ENCODE measurements at regions of chr1 and their contacts with region 1.

Region 1: DNA sequence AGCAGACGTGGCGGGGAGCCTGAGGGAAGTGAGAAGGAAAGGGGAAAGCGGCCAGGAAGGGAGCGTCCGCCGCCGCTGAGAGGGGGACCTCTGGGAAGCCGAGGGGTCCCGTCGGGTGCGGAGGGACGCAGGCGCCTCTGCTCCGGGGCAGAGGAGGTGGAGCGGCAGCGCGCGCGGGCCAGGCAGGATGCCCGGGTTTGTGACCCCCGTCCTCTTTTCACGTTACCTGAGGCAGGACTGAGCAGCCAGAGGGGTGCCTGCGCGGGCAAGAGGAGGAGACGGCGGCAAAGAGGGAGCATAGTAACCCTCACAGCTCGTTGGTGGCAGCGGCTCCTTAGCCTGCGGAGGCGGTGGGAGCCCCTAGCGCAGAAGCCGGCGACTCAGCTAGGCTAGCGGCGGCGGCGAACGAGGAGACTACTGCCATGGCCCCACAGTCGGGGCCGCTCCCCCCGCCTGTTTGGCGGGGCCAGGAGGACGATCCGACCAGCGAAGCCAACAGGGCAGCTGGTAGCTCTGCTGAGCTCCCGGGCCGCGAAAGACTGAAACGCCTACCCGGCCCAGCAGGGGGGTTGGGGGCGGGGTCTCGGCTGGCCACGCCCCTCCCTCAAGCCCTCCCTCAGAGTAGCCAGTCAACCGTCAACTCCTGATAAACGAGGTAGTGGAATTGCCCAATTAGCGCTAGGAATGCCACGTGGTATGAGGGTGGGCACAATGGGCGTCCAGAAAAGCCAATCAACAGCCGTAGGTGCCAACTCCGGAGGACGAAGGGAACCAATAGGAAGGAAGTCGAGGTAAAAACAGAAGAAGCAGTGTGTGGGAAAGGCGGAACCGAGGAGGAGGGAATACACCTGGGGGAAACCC is at the start of gene TESK2:
- DNase-seq: peak; percentile 98
- ATAC-seq: peak; percentile 95
- H3K4me3 Mint-ChIP-seq: no peak within 1 kb of the TSS
- H3K27ac Mint-ChIP-seq: no peak within 1 kb of the TSS
- H3K4me1 Mint-ChIP-seq: peaks cover 5% of the 10 kb centered on the region; the same call in 1 of the 2 replicates
- H3K27me3 Mint-ChIP-seq: no peaks in the 10 kb centered on the region
- CTCF ChIP-seq: no peak
- total RNA-seq, gene TESK2: 13.1 to 14.2 TPM (median 13.3 TPM) in 3 replicates

Region 2: GRCh38 chr1:45018599-45019230 is 472.1 kb before region 1 on chr1:
- CTCF ChIA-PET with region 1: interaction called, 16 read pairs
- POLR2A ChIA-PET with region 1: no interaction called
- DNase-seq: peak; percentile 78
- ATAC-seq: peak; percentile 95
- H3K4me3 Mint-ChIP-seq: no peak overlapping the region
- H3K27ac Mint-ChIP-seq: no peak overlapping the region
- H3K4me1 Mint-ChIP-seq: peaks cover 3% of the 10 kb centered on the region
- H3K27me3 Mint-ChIP-seq: no peaks in the 10 kb centered on the region; the same call in 1 of the 2 replicates
- CTCF ChIP-seq: peak; percentile 72

Region 3: GRCh38 chr1:45339789-45340570 is 150.9 kb before region 1 on chr1 and contains the starts of genes MUTYH and TOE1:
- CTCF ChIA-PET with region 1: interaction called, 27 read pairs
- POLR2A ChIA-PET with region 1: interaction called, 9 read pairs
- DNase-seq: peak; percentile 98
- ATAC-seq: peak; percentile 93
- H3K4me3 Mint-ChIP-seq: peak within 1 kb of the TSS; percentile 100
- H3K27ac Mint-ChIP-seq: peak within 1 kb of the TSS; percentile 99
- H3K4me1 Mint-ChIP-seq: peaks cover 32% of the 10 kb centered on the region
- H3K27me3 Mint-ChIP-seq: no peaks in the 10 kb centered on the region
- CTCF ChIP-seq: no peak
- total RNA-seq, gene MUTYH: 58.3 to 67.2 TPM (median 65.7 TPM) in 3 replicates
- total RNA-seq, gene TOE1: 7.4 to 10.9 TPM (median 10.0 TPM) in 3 replicates

Region 4: GRCh38 chr1:45359882-45360513 is 130.9 kb before region 1 on chr1:
- CTCF ChIA-PET with region 1: interaction called, 170 read pairs
- POLR2A ChIA-PET with region 1: interaction called, 7 read pairs
- DNase-seq: peak; percentile 32
- ATAC-seq: peak; percentile 50
- H3K4me3 Mint-ChIP-seq: peak overlapping the region; percentile 55
- H3K27ac Mint-ChIP-seq: peak overlapping the region; percentile 95
- H3K4me1 Mint-ChIP-seq: peaks cover 30% of the 10 kb centered on the region
- H3K27me3 Mint-ChIP-seq: no peaks in the 10 kb centered on the region
- CTCF ChIP-seq: peak; percentile 20; the same call in 1 of the 2 replicates

Region 5: DNA sequence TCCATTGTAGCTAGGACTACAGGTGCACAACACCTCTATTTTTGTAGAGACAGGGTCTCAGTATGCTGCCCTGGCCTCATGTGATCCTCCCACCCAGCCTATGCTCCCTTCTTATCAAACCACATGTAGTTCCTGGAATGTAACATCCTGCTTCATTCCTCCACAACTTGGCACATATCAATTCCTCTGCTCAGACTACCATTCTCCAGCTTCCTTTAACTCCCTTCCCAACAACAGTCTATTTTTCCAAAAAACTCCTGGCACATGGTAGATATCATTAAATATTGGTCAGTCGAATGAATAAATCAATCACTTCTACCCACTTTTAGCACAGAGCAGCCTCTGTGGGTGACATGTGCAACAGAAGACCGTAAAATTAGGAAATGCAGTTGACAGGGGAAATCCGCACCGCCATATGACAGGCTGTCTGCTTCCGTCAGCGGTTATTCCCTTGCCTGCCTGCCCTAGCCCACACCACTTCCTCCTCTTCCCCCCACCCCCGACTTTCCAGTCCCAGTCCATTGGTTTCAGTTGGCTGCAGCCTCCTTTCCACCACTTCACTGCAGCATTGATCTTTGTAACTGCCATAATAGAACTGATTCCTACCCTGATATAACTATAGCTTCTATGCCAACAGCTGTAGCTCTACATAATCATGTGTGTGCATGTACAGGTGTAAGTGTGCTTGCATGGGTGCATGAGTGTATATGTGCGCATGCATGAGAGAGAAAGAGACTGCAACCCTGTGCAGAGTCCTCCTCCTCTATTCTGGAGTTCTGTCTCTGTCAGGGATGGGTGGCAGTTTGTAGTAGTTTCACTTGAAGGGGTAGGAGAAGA is 52.9 kb after region 1 on chr1:
- CTCF ChIA-PET with region 1: no interaction called
- POLR2A ChIA-PET with region 1: no interaction called
- DNase-seq: peak; percentile 19
- ATAC-seq: peak; percentile 79
- H3K4me3 Mint-ChIP-seq: no peak overlapping the region
- H3K27ac Mint-ChIP-seq: no peak overlapping the region
- H3K4me1 Mint-ChIP-seq: peaks cover 11% of the 10 kb centered on the region
- H3K27me3 Mint-ChIP-seq: no peaks in the 10 kb centered on the region
- CTCF ChIP-seq: no peak

Measured in WTC11 (cell line).